Common myeloid progenitor, CD34-positive (primary cell): ENCODE measurements at regions of chr6 and their contacts with region 1.

Region 1: DNA sequence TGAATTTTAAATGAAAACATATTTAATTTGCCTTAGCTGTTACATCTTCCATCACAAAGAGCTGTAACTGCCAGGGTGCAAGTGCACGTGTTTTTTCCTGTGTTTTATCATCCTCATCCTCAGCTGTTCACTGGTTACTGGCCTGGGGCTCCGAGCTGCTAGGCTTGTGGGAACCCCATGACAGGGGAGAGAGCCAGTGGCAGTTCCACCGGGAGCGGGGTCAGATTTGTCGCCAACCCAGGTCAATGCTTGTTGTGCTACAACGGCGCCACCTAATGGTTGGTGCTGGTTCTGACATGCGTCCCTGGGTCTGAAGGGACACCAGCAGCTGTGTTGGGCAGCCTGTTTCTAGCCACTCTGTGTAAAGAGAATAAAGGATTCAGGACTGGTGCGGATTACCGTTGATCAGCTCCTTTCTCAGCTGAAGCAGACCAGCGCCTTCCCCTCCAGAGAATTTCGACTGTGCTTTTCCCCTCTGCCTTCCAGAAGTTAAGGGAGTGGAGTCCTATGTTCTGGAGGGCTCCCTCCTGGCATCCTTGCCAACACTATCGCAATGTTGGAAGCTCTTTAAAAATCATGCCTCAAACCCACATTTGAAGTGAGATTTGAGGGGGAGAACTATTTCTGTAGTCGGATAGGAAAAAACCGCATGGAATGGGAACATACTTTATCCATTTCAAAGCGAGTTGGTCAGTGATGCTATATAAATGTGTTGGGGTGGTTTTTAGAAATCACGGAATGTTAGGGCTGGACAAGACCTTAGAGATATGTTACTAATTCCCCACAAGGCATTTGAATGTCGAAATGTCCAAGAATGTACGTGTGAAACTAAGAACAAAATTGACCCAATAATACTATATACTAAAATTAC is 32.1 kb downstream of the SUMO4 start:
- DNase-seq: peak; percentile 82 to 89 (median 83)
- H3K4me3 ChIP-seq: peak overlapping the region in 2 of 7 experiments; percentile 56 to 58
- H3K27ac ChIP-seq: no peak overlapping the region
- H3K4me1 ChIP-seq: peaks cover 0 to 10% (median 4%) of the 10 kb centered on the region in 4 experiments
- H3K27me3 ChIP-seq: no peaks in the 10 kb centered on the region

Region 2: DNA sequence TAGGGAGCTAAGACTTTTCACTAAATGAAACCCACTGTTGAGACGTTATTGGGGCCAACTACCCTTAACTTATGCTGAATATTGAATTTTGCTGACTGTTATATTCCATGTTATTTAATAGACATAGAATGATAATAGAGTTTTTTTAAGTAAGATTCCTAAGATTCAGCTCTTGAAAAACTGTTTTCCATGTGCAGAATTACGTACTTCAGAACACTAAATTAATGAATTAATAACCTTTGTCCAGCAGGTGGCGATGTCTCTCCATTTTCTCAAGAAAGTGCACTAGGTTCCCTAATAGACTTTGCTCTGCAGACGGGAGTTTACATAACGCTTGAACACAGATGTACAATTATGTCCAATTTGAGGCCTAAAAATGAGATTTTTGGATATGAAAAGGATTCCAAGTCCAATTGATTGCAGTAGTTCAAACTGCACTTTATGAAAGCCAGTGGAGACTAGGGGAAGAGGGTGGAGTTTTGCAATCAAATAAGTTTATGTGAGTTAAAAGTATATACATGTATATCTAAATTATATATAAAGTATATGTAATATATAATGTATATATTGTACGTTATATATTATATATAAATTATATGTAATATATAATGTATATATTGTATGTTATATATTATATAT is 403.3 kb before region 1 on chr6:
- CTCF ChIA-PET with region 1: interaction called, 86 read pairs
- POLR2A ChIA-PET with region 1: no interaction called
- DNase-seq: peak; percentile 92 to 97 (median 94)
- H3K4me3 ChIP-seq: no peak overlapping the region
- H3K27ac ChIP-seq: no peak overlapping the region
- H3K4me1 ChIP-seq: peaks cover 1 to 30% (median 26%) of the 10 kb centered on the region in 4 experiments
- H3K27me3 ChIP-seq: no peaks in the 10 kb centered on the region

Region 3: GRCh38 chr6:149075616-149076364 is 356.4 kb before region 1 on chr6:
- CTCF ChIA-PET with region 1: interaction called, 17 read pairs
- POLR2A ChIA-PET with region 1: no interaction called
- DNase-seq: peak in 2 of 3 donors; percentile 62 to 68
- H3K4me3 ChIP-seq: no peak overlapping the region
- H3K27ac ChIP-seq: no peak overlapping the region
- H3K4me1 ChIP-seq: peaks cover 5 to 24% (median 16%) of the 10 kb centered on the region in 4 experiments
- H3K27me3 ChIP-seq: no peaks in the 10 kb centered on the region

Region 4: DNA sequence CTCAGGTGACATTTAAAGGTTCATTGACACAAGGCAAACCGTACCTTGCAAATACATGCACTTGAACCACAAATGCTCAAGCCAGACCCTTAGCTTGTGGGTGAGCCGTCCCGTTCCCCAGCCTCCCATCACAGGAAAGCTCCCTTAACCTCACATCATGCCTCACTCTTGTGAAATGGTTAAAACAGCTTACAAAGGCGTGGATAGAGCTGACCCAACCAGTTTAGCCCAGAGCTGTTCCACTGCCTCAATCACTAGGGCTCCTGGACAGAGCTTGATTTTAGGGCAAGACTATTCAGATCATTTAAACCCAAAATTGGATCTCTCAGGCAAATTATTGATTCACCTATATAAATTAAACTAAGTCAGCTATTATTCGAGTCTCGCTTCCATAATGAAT is 344.2 kb before region 1 on chr6:
- CTCF ChIA-PET with region 1: interaction called, 13 read pairs
- POLR2A ChIA-PET with region 1: no interaction called
- DNase-seq: no peak
- H3K4me3 ChIP-seq: no peak overlapping the region
- H3K27ac ChIP-seq: no peak overlapping the region
- H3K4me1 ChIP-seq: peaks cover 2 to 36% (median 15%) of the 10 kb centered on the region in 4 experiments
- H3K27me3 ChIP-seq: no peaks in the 10 kb centered on the region

Region 5: DNA sequence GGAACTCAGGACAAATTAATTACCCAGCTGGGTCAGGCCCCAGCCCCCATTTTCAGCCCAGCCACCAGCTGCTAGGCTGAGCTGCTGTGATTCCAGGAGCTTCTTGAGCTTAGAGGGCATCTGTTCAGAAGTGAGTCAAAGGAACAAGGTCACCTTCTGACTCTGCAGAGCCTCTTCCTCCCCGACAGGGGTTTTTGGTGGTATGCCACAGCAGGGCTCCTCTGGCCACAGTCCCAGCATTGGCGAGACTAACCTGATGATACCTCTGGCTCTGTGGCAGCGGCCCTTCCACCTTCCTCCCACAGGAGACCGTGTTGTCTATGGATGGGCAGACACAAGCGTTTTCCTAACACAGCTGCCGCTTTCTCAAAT is 12.9 kb after region 1 on chr6:
- CTCF ChIA-PET with region 1: interaction called, 10 read pairs
- POLR2A ChIA-PET with region 1: no interaction called
- DNase-seq: no peak
- H3K4me3 ChIP-seq: no peak overlapping the region
- H3K27ac ChIP-seq: no peak overlapping the region
- H3K4me1 ChIP-seq: no peaks in the 10 kb centered on the region
- H3K27me3 ChIP-seq: peaks cover 0 to 17% (median 2%) of the 10 kb centered on the region in 5 experiments